AG04449 (cell line): ENCODE measurements at regions of chr5 and their contacts with region 1.

Region 1: GRCh38 chr5:136249678-136250266 is 56.8 kb upstream of the SMIM32 start:
- DNase-seq: peak; percentile 41
- H3K4me3 ChIP-seq: no peak overlapping the region
- CTCF ChIP-seq: peak; percentile 92

Region 2: DNA sequence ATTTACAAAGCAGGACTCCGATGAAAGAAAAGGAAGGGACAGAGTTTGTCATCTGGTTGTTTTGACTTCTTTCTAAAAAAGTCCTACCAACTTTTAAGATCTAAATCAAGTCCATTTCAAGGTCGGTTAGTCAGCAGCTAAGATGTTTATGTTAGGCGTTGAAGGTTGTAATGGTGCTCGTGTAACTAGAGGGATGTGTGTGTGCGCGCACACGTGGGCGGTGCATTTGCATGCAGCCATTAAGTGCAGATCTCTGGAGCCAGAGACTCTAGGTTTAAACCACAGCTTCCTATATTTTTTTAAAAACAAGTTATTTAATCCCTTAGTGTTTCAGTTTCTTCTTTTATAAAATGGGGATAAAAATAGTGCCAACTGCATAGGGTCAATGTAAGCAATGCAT is 20.2 kb after region 1 on chr5:
- CTCF ChIA-PET with region 1: interaction called, 17 read pairs
- POLR2A ChIA-PET with region 1: no interaction called
- DNase-seq: no peak
- H3K4me3 ChIP-seq: no peak overlapping the region
- CTCF ChIP-seq: no peak

Region 3: DNA sequence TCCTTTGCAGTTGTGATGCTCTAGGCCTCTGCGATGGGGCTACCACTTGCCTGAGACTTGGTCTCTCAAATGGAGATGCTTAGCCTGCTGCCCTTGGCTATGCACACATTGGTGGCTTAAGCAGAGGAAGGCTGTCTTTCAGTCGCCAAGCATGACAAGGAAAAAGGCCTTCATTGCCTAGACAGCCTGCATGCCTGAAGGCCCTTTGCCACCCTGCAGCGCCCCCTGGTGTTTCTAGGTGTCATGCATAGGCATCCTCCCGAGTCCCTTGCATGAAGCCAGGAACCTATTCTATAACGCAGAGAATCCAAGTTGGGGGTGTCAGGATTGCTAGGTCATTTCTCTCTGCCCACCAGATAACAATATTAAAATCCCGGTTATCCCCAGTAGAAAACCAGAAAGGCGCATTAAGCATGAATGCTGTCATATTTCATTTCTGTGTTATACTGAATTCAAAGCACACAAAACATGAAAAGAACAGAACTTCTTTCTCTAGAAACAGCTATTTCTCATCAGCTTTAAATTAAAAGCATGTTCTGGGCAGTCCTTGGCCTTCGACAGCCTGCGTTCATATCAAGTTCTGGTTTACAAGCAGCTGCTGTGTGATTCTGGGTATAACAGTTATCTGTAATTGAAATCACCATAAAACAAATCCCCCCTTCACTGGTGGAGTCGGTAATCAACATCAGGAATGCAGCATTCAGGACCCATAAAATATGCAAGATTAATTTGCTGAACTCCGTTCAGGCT is 175.2 kb after region 1 on chr5:
- CTCF ChIA-PET with region 1: interaction called, 43 read pairs
- POLR2A ChIA-PET with region 1: no interaction called
- DNase-seq: no peak
- H3K4me3 ChIP-seq: no peak overlapping the region
- CTCF ChIP-seq: peak; percentile 84

Region 4: GRCh38 chr5:136686192-136686872 is 436.6 kb after region 1 on chr5:
- CTCF ChIA-PET with region 1: interaction called, 16 read pairs
- POLR2A ChIA-PET with region 1: no interaction called
- DNase-seq: no peak
- H3K4me3 ChIP-seq: no peak overlapping the region
- CTCF ChIP-seq: peak; percentile 41